Ovary (tissue), 10 donors: ENCODE measurements at regions of chrX and their contacts with region 1.

Region 1: GRCh38 chrX:40773809-40774208 is 38.5 kb upstream of the MED14 start:
- DNase-seq: no peak
- H3K4me3 ChIP-seq: no peak overlapping the region
- H3K27ac ChIP-seq: no peak overlapping the region
- H3K4me1 ChIP-seq: no peaks in the 10 kb centered on the region
- H3K27me3 ChIP-seq: no peaks in the 10 kb centered on the region
- CTCF ChIP-seq: no peak
- EP300 ChIP-seq: no peak
- POLR2A ChIP-seq: no peak

Region 2: GRCh38 chrX:39582091-39582490 is 1191.7 kb before region 1 on chrX:
- intact Hi-C with region 1: loop called in 1 of 4 experiments (anchors 5 kb)
- DNase-seq: no peak
- H3K4me3 ChIP-seq: no peak overlapping the region
- H3K27ac ChIP-seq: no peak overlapping the region
- H3K4me1 ChIP-seq: no peaks in the 10 kb centered on the region
- H3K27me3 ChIP-seq: no peaks in the 10 kb centered on the region
- CTCF ChIP-seq: no peak
- EP300 ChIP-seq: no peak
- POLR2A ChIP-seq: no peak